Gastrocnemius medialis (tissue), 4 donors: ENCODE measurements at regions of chr3 and their contacts with region 1.

Region 1: DNA sequence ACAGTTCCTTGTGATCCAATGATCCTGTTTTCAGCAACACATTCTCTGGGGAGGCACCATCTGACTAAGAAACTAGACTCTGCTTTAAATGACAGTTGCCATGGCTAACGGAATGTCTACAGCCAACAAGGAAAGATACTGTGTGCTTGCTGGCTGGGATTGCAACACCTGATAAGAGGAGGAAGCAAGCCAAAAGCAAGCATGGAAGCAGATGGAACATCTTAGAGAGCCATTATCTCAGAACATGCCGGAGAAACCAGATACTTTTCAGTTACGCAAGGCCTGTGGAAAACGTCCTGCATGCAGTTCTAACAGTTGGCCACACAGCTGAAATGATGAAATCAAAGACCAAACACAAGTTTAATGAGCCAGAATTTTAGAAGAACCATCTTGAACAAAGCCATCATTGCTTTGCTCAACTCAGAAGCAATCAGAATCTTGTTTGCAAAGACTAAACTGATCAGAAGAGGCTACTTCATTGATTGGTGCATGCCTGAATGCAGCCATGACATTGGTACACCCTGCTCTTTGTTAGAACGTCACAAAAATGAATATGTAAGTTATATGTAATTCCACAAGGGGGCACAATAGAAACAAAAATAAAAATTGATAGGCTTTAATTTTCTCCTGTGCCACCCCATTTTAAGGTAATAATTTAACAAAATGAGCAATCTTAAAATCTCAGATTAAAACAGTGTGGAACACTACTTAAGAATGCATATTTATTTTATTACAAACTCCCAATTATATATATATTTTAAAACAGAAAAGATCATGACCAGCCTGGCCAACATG is 50.8 kb downstream of the GXYLT2 start:
- DNase-seq: peak; percentile 79
- ATAC-seq: peak; percentile 99 to 100
- H3K4me3 ChIP-seq: no peak overlapping the region
- H3K27ac ChIP-seq: peak overlapping the region; percentile 35 to 73 (median 54)
- H3K4me1 ChIP-seq: peaks cover 10 to 11% of the 10 kb centered on the region in 2 donors
- H3K27me3 ChIP-seq: no peaks in the 10 kb centered on the region
- CTCF ChIP-seq: peak; percentile 59 to 95 (median 71)
- POLR2A ChIP-seq: no peak

Region 2: GRCh38 chr3:72887705-72888545 is 50.7 kb before region 1 on chr3 and contains the start of gene GXYLT2:
- in situ Hi-C with region 1: no loop called
- intact Hi-C with region 1: loop called (anchors 2 kb)
- DNase-seq: peak in 1 of 2 donors; percentile 26
- ATAC-seq: peak; percentile 61 to 74
- H3K4me3 ChIP-seq: peak within 1 kb of the TSS; percentile 48 to 63 (median 50)
- H3K27ac ChIP-seq: peak within 1 kb of the TSS in 2 of 4 donors; percentile 27 to 31
- H3K4me1 ChIP-seq: peaks cover 14% of the 10 kb centered on the region in 2 donors
- H3K27me3 ChIP-seq: no peaks in the 10 kb centered on the region
- CTCF ChIP-seq: peak in 1 of 5 experiments; percentile 18
- POLR2A ChIP-seq: no peak
- total RNA-seq, gene GXYLT2: 0.31 to 0.94 (median 0.38) TPM in 3 of 4 donors, not detected in the other